MCF 10A (cell line): ENCODE measurements at regions of chr7 and their contacts with region 1.

Region 1: GRCh38 chr7:148712678-148713329 is 14.1 kb downstream of the CUL1 start:
- DNase-seq: no peak
- H3K4me3 Mint-ChIP-seq: no peak overlapping the region
- H3K27ac Mint-ChIP-seq: no peak overlapping the region
- H3K4me1 Mint-ChIP-seq: peaks cover 38% of the 10 kb centered on the region
- H3K27me3 Mint-ChIP-seq: no peaks in the 10 kb centered on the region
- CTCF ChIP-seq: no peak

Region 2: GRCh38 chr7:148698397-148699023 is 14.3 kb before region 1 on chr7 and contains the start of gene CUL1:
- CTCF ChIA-PET with region 1: interaction called, 6 read pairs
- POLR2A ChIA-PET with region 1: interaction called, 23 read pairs
- intact Hi-C with region 1: no loop called
- DNase-seq: peak; percentile 83
- H3K4me3 Mint-ChIP-seq: peak within 1 kb of the TSS; percentile 85
- H3K27ac Mint-ChIP-seq: peak within 1 kb of the TSS; percentile 71
- H3K4me1 Mint-ChIP-seq: peaks cover 46% of the 10 kb centered on the region
- H3K27me3 Mint-ChIP-seq: no peaks in the 10 kb centered on the region
- CTCF ChIP-seq: no peak
- total RNA-seq, gene CUL1: 41.2 and 49.2 TPM in 2 replicates